Caco-2 (cell line): ENCODE measurements at regions of chr1 and their contacts with region 1.

Region 1: DNA sequence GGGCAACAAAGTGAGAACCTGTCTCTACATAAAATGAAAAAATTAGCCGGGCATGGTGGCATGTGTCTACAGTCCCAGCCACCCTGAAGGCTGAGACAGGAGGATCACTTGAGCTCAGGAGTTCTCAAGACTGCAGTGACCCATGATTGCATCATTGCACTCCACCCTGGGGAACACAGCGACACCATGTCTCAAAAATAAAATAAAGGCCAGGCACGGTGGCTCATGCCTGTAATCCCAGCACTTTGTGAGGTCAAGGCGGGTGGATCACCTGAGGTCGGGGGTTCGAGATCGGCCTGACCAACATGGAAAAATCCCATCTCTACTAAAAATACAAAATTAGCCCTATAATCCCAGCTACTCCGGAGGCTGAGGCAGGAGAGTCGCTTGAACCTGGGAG is 20.1 kb downstream of the ANKRD13C start:
- DNase-seq: no peak
- H3K4me3 ChIP-seq: no peak overlapping the region
- H3K4me3 Mint-ChIP-seq: no peak overlapping the region
- H3K27ac Mint-ChIP-seq: no peak overlapping the region
- H3K4me1 ChIP-seq: peaks cover 7% of the 10 kb centered on the region
- H3K4me1 Mint-ChIP-seq: peaks cover 7% of the 10 kb centered on the region
- H3K27me3 ChIP-seq: no peaks in the 10 kb centered on the region
- H3K27me3 Mint-ChIP-seq: no peaks in the 10 kb centered on the region
- CTCF ChIP-seq: no peak

Region 2: DNA sequence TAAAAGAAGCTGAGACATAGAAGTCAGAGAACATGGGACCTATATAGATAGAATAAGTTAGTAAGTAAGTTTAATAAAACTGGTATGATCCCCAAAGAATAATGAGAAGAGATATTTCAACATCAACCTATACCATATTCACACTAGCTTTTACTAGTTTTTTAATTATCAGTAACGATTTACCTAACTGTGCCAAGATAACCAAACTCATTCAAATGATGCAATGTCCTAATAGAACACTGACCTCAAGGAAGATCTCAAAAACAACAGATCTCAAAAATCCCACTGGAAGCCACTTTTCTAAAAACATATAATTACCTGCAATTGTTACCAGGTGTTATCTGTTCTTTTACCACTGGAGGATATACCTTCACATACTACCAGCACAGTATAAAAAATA is 18.7 kb before region 1 on chr1:
- CTCF ChIA-PET with region 1: no interaction called
- POLR2A ChIA-PET with region 1: no interaction called
- intact Hi-C with region 1: loop called (anchors 1 kb)
- DNase-seq: no peak
- H3K4me3 ChIP-seq: no peak overlapping the region
- H3K4me3 Mint-ChIP-seq: no peak overlapping the region
- H3K27ac Mint-ChIP-seq: no peak overlapping the region
- H3K4me1 ChIP-seq: 0 out of 2 replicates have a peak, but pooled peaks cover 3% of the 10 kb centered on the region
- H3K4me1 Mint-ChIP-seq: peaks cover 13% of the 10 kb centered on the region
- H3K27me3 ChIP-seq: no peaks in the 10 kb centered on the region
- H3K27me3 Mint-ChIP-seq: no peaks in the 10 kb centered on the region
- CTCF ChIP-seq: no peak